AG04450 (cell line): ENCODE measurements at regions of chr13 and their contacts with region 1.

Region 1: DNA sequence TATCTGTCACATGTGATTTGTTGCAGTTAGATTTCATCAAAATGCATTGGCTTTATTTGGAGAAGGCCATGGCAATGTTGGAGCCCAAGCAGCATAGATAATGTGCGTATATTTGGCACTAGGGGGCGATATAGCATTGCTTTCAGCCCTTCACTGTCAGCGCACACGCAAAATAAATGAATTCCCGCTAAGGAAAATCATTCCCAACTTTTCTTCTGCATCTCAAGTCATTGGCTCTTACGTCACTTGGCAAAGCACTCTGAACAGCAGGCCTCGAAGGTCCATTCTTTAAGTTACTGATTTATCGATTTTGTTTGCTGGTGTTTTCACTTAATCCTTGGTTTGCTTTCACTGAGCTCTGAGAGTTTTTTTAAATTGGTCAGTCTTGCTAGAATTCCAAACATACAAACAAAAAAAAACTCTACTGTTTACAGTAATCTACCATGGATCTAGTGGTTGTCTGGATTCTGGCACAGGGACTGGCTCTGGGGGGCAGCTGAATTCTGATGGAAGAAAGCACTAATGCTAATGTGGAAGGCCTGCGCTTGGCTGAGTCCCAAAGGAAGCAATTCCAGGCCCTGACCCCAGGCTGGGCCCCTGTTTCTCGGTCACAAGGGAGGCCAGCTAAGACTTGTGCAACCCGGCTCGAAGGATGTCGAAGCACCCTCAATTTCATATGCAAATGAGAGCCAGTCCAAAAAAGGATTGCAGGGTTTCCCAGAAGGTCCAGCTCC is 97.7 kb upstream of the IPO5 start:
- DNase-seq: peak; percentile 66
- H3K4me3 ChIP-seq: no peak overlapping the region
- H3K27ac ChIP-seq: no peak overlapping the region
- H3K27me3 ChIP-seq: peaks cover 4% of the 10 kb centered on the region
- CTCF ChIP-seq: peak; percentile 83

Region 2: DNA sequence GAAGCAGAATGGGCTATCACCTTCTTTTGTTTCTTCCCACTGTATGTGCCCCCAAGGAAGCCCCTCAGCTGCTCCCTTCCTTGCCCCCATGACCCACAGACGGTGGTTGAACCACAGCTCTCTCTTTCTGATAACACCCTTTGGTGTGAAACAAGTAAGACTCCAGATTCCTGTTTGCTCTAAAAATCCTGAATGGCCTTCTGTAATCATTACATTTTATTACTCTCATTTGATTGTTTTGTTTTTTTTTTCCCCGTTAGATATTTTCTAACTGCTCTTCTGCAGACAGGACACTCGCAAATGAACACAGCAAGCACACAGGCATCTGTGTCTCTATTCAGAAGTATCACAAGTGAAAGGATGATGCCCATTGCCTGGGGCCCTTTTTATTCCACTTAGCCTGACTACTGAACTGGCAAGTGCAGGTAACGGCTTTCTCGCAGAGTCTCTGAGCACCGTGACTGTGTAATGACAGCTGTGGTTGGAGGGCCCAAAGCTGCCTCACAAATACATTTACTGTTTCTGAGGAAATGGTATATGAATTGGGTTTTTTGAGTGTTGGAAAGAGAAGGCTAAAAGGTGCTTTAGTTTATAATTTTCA is 920.7 kb before region 1 on chr13:
- CTCF ChIA-PET with region 1: no interaction called
- POLR2A ChIA-PET with region 1: no interaction called
- DNase-seq: no peak
- H3K4me3 ChIP-seq: no peak overlapping the region
- H3K27ac ChIP-seq: no peak overlapping the region
- H3K27me3 ChIP-seq: no peaks in the 10 kb centered on the region
- CTCF ChIP-seq: no peak

Region 3: GRCh38 chr13:97911311-97912128 is 55.8 kb after region 1 on chr13:
- CTCF ChIA-PET with region 1: interaction called, 27 read pairs
- POLR2A ChIA-PET with region 1: no interaction called
- DNase-seq: no peak
- H3K4me3 ChIP-seq: no peak overlapping the region
- H3K27ac ChIP-seq: no peak overlapping the region
- H3K27me3 ChIP-seq: no peaks in the 10 kb centered on the region
- CTCF ChIP-seq: peak; percentile 50